Calu3 (cell line): ENCODE measurements at regions of chr11 and their contacts with region 1.

Region 1: GRCh38 chr11:68099474-68100405 is 21.4 kb downstream of the CHKA start:
- DNase-seq: peak; percentile 68
- H3K4me3 Mint-ChIP-seq: peak overlapping the region; percentile 43
- H3K27ac Mint-ChIP-seq: peak overlapping the region; percentile 61
- H3K4me1 Mint-ChIP-seq: peaks cover 62% of the 10 kb centered on the region
- H3K27me3 Mint-ChIP-seq: no peaks in the 10 kb centered on the region
- CTCF ChIP-seq: no peak

Region 2: GRCh38 chr11:68083517-68083916 is 16.2 kb before region 1 on chr11:
- CTCF ChIA-PET with region 1: interaction called, 12 read pairs
- intact Hi-C with region 1: no loop called
- DNase-seq: no peak
- H3K4me3 Mint-ChIP-seq: no peak overlapping the region
- H3K27ac Mint-ChIP-seq: no peak overlapping the region
- H3K4me1 Mint-ChIP-seq: peaks cover 5% of the 10 kb centered on the region
- H3K27me3 Mint-ChIP-seq: no peaks in the 10 kb centered on the region
- CTCF ChIP-seq: no peak